ENCODE measurements at regions of chr2 and their contacts with region 1.

Region 1: DNA sequence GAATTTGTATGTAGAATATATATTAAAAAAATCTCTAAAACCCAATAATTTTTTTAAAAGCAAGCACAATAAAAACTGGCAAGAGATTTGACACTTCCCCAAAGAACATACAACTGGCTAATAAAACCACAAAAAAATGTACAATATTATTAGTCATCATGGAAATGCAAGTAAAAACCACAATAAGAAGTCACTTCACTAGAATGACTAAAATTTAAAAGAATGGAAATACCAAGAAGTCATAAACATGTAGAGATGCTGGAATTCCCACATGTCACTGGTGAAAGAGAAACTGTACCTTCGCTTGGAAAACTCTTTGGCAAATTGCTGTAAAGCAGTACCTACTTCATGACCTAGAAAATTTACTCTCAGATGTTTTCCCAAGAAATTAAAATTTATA is 43.4 kb upstream of the KYNU start:
- DNase-seq: no peak
- H3K4me3 ChIP-seq: no peak overlapping the region
- H3K27ac ChIP-seq: no peak overlapping the region
- H3K27me3 ChIP-seq: no peaks in the 10 kb centered on the region
- CTCF ChIP-seq: no peak

Region 2: GRCh38 chr2:142769761-142770160 is 64.3 kb before region 1 on chr2:
- CTCF ChIA-PET with region 1: no interaction called
- POLR2A ChIA-PET with region 1: no interaction called
- DNase-seq: no peak
- H3K4me3 ChIP-seq: no peak overlapping the region
- H3K27ac ChIP-seq: no peak overlapping the region
- H3K27me3 ChIP-seq: no peaks in the 10 kb centered on the region
- CTCF ChIP-seq: no peak

Region 3: GRCh38 chr2:142819411-142819810 is 14.6 kb before region 1 on chr2:
- CTCF ChIA-PET with region 1: no interaction called
- POLR2A ChIA-PET with region 1: no interaction called
- DNase-seq: no peak
- H3K4me3 ChIP-seq: no peak overlapping the region
- H3K27ac ChIP-seq: no peak overlapping the region
- H3K27me3 ChIP-seq: no peaks in the 10 kb centered on the region
- CTCF ChIP-seq: no peak

Region 4: GRCh38 chr2:142863485-142863961 is 29.5 kb after region 1 on chr2:
- CTCF ChIA-PET with region 1: no interaction called
- POLR2A ChIA-PET with region 1: interaction called, 20 read pairs
- DNase-seq: peak; percentile 80
- H3K4me3 ChIP-seq: no peak overlapping the region
- H3K27ac ChIP-seq: peak overlapping the region; percentile 74
- H3K27me3 ChIP-seq: no peaks in the 10 kb centered on the region
- CTCF ChIP-seq: no peak